ENCODE measurements at regions of chr10 and their contacts with region 1.

Region 1: GRCh38 chr10:126387023-126387921 is 1.0 kb downstream of the ADAM12 start:
- DNase-seq: peak; percentile 70
- ATAC-seq: no peak
- H3K4me3 Mint-ChIP-seq: peak overlapping the region; percentile 64
- H3K27ac Mint-ChIP-seq: no peak overlapping the region
- H3K4me1 Mint-ChIP-seq: peaks cover 6% of the 10 kb centered on the region
- H3K27me3 Mint-ChIP-seq: peaks cover 33% of the 10 kb centered on the region

Region 2: DNA sequence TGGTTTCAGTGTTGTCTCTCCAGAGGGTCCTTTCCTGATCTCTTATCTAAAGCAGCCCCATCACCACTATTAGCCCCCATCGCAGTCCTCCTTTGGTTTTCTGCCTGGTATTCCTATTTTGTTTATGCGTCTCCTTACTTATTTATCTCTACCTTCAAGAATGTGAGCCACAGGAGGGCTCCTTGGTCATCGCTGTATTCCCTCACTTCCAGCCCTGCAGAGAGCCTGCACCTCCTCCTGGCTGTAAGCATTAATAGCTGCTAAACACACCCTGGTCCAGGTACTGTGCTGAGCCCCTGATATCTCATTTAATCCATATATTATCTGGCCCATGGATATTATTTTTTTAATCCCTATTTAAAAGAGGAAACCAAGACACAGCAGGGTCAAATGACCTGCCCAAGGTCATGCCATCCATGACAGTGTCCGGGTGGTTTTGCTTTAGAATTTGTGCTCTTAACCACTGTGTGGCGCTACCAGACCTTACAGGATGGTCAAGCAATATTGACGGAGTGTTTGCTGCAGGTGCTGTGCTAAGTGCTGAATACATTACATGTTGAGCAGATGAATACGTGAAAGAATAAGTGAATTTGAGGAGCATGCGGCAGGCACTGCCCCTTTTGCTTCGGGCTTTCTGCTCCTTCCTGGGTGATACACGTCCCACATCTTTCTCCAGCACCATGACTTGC is 226.2 kb before region 1 on chr10:
- CTCF ChIA-PET with region 1: no interaction called
- POLR2A ChIA-PET with region 1: no interaction called
- intact Hi-C with region 1: loop called in 1 of 2 experiments (anchors 10 kb)
- DNase-seq: no peak
- ATAC-seq: no peak
- H3K4me3 Mint-ChIP-seq: no peak overlapping the region
- H3K27ac Mint-ChIP-seq: no peak overlapping the region
- H3K4me1 Mint-ChIP-seq: no peaks in the 10 kb centered on the region
- H3K27me3 Mint-ChIP-seq: peaks cover 4% of the 10 kb centered on the region

Measured in activated CD4-positive, alpha-beta T cell treated with anti-CD3 and anti-CD28 coated beads for 36 hours (primary cell).